ENCODE measurements at regions of chr22 and their contacts with region 1.

Region 1: GRCh38 chr22:31526270-31526669 is 29.9 kb downstream of the SFI1 start:
- DNase-seq: peak in 1 of 2 donors; percentile 46
- ATAC-seq: peak in 2 of 3 donors; percentile 25 to 44
- H3K4me3 ChIP-seq: no peak overlapping the region
- H3K4me3 Mint-ChIP-seq: peak overlapping the region; percentile 31
- H3K27ac ChIP-seq: no peak overlapping the region
- H3K27ac Mint-ChIP-seq: peak overlapping the region in 1 of 2 donors; percentile 81
- H3K4me1 ChIP-seq: peaks cover 13% of the 10 kb centered on the region
- H3K4me1 Mint-ChIP-seq: peaks cover 31 to 40% of the 10 kb centered on the region in 2 donors
- H3K27me3 ChIP-seq: no peaks in the 10 kb centered on the region
- H3K27me3 Mint-ChIP-seq: no peaks in the 10 kb centered on the region
- CTCF ChIP-seq: no peak

Region 2: GRCh38 chr22:31451709-31452571 is 74.3 kb before region 1 on chr22:
- intact Hi-C with region 1: loop called (anchors 2 kb)
- DNase-seq: peak in 1 of 2 donors; percentile 57
- ATAC-seq: peak; percentile 53 to 71 (median 70)
- H3K4me3 ChIP-seq: no peak overlapping the region
- H3K4me3 Mint-ChIP-seq: no peak overlapping the region
- H3K27ac ChIP-seq: no peak overlapping the region
- H3K27ac Mint-ChIP-seq: peak overlapping the region; percentile 55 to 62
- H3K4me1 ChIP-seq: no peaks in the 10 kb centered on the region
- H3K4me1 Mint-ChIP-seq: peaks cover 11 to 12% of the 10 kb centered on the region in 2 donors
- H3K27me3 ChIP-seq: no peaks in the 10 kb centered on the region
- H3K27me3 Mint-ChIP-seq: no peaks in the 10 kb centered on the region
- CTCF ChIP-seq: no peak

Region 3: DNA sequence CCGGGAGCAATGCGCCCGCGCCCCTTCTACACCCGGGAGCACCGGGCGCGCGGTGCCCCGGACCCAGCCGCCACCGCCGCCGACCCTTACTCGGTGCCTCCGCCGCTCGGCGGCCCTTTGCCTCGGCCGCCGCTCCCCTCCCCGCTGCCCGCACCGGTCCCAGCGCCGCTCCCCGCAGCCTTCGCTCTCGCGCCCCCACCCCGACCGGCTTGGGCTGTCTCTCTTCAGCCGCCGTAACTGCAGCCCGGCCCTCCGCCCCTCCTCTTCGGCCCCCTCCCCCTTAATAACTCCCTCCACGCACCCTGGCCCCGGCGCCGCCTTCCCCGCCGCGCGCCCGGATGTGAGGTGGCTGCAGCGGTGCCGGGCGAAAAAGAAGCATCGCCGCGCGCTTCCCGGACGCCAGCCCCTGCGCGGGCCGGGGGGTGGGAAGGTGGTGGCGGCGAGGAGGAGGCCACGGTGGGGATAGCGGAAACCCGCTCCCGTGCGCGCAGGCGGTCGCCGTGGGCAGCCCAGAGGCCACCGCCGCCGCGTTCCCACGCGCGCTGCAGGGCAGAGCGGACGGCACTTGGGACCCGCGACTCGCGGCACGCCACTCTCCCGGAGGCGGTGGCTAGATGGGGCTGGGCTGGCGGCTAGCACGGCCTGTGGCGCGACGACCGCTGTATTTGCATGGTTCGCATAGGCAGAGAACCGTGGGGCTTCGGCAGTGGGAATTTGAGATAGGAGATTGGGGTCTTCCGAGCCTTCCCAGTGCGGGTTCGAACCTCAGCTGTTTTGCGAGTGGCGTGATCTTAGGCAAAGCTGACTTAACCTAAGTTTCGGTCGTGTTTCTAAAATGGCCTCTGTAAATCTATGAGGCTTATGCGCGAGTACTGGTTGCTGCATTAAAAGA is 36.4 kb before region 1 on chr22 and contains the start of gene EIF4ENIF1:
- intact Hi-C with region 1: loop called (anchors 5 kb)
- DNase-seq: peak; percentile 78 to 90
- ATAC-seq: peak; percentile 82 to 90 (median 84)
- H3K4me3 ChIP-seq: peak within 1 kb of the TSS; percentile 91
- H3K4me3 Mint-ChIP-seq: peak within 1 kb of the TSS; percentile 97
- H3K27ac ChIP-seq: peak within 1 kb of the TSS; percentile 96
- H3K27ac Mint-ChIP-seq: peak within 1 kb of the TSS; percentile 95 to 97
- H3K4me1 ChIP-seq: peaks cover 19% of the 10 kb centered on the region
- H3K4me1 Mint-ChIP-seq: peaks cover 26% of the 10 kb centered on the region in 2 donors
- H3K27me3 ChIP-seq: no peaks in the 10 kb centered on the region
- H3K27me3 Mint-ChIP-seq: no peaks in the 10 kb centered on the region
- CTCF ChIP-seq: no peak
- total RNA-seq, gene EIF4ENIF1: 31.1 to 41.7 (median 41.2) TPM

Measured in natural killer cell (primary cell).